Panc1 (cell line): ENCODE measurements at regions of chr19 and their contacts with region 1.

Region 1: DNA sequence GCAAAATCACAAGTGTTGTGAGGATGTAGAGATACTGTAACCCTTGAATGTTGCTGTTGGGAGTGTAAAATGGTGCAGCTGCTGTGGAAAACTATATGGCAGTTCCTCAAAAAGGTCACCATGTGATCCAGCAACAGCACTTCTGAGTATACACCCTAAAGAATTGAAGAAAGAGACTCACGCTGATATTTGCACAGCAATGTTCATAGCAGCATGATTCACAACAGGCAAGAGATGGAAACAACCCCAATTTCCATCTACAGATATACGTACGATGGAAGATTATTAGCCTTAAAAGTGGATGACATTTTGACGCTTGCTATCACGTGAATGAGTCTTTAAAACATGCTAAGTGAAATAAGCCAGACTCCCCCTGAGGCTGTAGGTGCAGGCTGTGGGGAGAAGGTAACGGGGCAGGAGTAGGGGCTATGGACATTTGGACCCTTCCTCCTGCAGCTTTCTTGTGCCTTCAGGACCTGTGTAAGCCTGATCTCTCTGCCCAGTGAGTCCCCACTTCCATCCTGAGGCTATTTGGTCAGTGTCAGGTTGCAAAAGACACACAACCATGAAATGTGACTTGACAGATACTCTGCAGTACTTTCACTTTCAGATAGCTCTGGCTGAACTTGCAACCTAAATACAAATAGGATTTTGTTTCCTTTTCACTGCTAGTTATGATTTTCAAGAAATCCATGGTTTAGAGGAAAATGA is 17.6 kb upstream of the EID2 start:
- DNase-seq: peak; percentile 91
- ATAC-seq: peak; percentile 82
- H3K4me3 ChIP-seq: peak overlapping the region; percentile 0 to 36; a peak in 3 of 4 replicates
- H3K27ac ChIP-seq: peak overlapping the region; percentile 0; the same call in 1 of the 2 replicates
- H3K4me1 ChIP-seq: peaks cover 17% of the 10 kb centered on the region
- H3K27me3 ChIP-seq: peaks cover 43% of the 10 kb centered on the region
- CTCF ChIP-seq: no peak

Region 2: DNA sequence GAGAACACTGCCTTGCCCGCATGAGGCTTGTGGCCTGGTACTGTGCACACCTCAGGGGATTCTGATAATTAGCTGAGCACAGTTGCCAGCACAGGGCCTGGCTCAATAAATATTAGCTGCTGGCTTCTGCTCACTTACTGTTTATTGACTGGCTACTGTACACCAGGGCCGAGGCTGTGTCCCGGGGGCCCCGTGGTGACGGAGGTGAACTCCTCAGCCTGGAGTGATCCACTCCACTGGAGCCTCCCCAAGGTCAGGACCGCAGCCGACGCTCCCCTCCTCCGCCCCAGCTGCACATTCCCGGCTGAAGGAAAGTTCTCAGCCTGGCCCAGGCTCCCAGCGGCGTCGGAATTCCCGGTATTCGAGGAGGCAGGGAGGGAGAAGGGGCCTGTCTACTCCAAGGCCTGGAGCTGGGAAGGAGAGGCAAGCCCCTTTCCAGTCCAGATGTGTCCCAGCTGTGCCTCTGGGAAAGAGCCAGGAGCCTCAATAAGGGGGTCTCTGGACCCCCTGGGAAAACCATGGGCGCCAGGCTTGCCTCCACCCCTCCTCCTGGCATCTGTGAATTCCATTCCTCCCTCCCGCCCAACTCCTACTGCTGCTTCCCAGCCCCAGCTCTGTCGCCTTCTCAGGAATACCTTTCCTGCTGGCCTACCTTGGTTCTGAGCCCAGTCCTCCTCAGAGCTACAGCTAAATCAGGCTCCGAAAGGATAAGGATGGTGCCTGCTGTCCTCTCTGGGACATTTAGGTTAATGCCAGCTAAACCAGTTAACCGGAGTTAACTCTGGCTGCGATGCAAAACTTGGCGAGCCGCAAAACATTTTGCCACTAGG is 129.1 kb before region 1 on chr19:
- CTCF ChIA-PET with region 1: no interaction called
- POLR2A ChIA-PET with region 1: no interaction called
- in situ Hi-C with region 1: no loop called
- intact Hi-C with region 1: no loop called
- DNase-seq: peak; percentile 92
- ATAC-seq: peak; percentile 70
- H3K4me3 ChIP-seq: peak overlapping the region; percentile 0 to 17; a peak in 3 of 4 replicates
- H3K27ac ChIP-seq: peak overlapping the region; percentile 86
- H3K4me1 ChIP-seq: peaks cover 75% of the 10 kb centered on the region
- H3K27me3 ChIP-seq: no peaks in the 10 kb centered on the region
- CTCF ChIP-seq: no peak

Region 3: DNA sequence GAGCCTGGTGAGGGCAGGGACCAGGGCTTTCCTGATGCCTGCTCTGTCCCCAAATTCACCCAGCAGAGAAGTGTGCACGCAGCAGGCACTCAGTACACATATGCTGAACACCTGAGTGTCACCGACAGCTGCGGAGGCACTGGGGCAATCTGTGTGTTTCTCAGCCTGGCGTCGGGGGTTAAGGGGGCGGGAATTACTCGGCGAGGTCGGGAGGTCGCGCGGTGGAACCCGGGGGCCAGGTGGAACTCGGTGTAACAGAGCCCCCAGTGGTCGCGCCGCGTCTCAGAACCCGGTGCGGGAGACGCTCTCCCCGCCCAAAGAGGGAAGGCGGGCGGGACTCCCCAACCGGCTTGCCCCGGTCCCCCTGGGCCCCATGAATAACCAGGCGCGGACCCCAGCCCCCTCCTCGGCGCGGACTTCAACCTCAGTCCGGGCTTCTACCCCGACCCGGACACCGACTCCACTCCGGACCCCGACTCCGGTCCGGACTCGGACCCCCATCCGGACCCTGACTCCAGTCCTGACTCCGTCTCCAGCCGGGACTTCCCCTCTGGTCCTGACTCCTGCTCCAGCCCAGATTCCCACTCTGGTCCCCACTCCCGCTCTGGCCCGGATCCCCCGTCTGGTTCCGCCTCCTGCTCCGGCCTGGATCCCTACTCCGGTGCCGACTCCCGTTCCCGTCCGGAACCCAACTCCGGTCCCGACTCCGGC is 42.6 kb before region 1 on chr19 and contains the start of gene SELENOV:
- CTCF ChIA-PET with region 1: no interaction called
- POLR2A ChIA-PET with region 1: interaction called, 16 read pairs
- in situ Hi-C with region 1: no loop called
- intact Hi-C with region 1: no loop called
- DNase-seq: no peak
- ATAC-seq: peak; percentile 56
- H3K4me3 ChIP-seq: peak within 1 kb of the TSS; percentile 30 to 55
- H3K27ac ChIP-seq: peak within 1 kb of the TSS; percentile 5
- H3K4me1 ChIP-seq: peaks cover 26% of the 10 kb centered on the region
- H3K27me3 ChIP-seq: peaks cover 23% of the 10 kb centered on the region
- CTCF ChIP-seq: no peak
- total RNA-seq, gene SELENOV: 0.80 TPM

Region 4: GRCh38 chr19:39582891-39583625 is 25.5 kb after region 1 on chr19:
- CTCF ChIA-PET with region 1: no interaction called
- POLR2A ChIA-PET with region 1: no interaction called
- in situ Hi-C with region 1: no loop called
- intact Hi-C with region 1: no loop called
- DNase-seq: no peak
- ATAC-seq: peak; percentile 27
- H3K4me3 ChIP-seq: no peak overlapping the region
- H3K27ac ChIP-seq: no peak overlapping the region
- H3K4me1 ChIP-seq: no peaks in the 10 kb centered on the region
- H3K27me3 ChIP-seq: peaks cover 68% of the 10 kb centered on the region
- CTCF ChIP-seq: peak; percentile 67

Region 5: GRCh38 chr19:39934584-39935363 is 377.2 kb after region 1 on chr19 and contains the start of gene FCGBP:
- CTCF ChIA-PET with region 1: interaction called, 15 read pairs
- POLR2A ChIA-PET with region 1: no interaction called
- in situ Hi-C with region 1: loop called (anchors 10 kb)
- intact Hi-C with region 1: no loop called
- DNase-seq: no peak
- ATAC-seq: peak; percentile 31
- H3K4me3 ChIP-seq: no peak within 1 kb of the TSS
- H3K27ac ChIP-seq: no peak within 1 kb of the TSS
- H3K4me1 ChIP-seq: no peaks in the 10 kb centered on the region
- H3K27me3 ChIP-seq: peaks cover 30% of the 10 kb centered on the region
- CTCF ChIP-seq: no peak
- total RNA-seq, gene FCGBP: 6.4 TPM